ENCODE measurements at regions of chr3 and their contacts with region 1.

Region 1: GRCh38 chr3:49358217-49358883 is at the start of gene GPX1:
- DNase-seq: peak; percentile 94 to 98 (median 97)
- H3K4me3 ChIP-seq: peak within 1 kb of the TSS; percentile 36 to 80 (median 54)
- H3K27ac ChIP-seq: peak within 1 kb of the TSS; percentile 87 to 95 (median 90)
- H3K4me1 ChIP-seq: peaks cover 16 to 37% of the 10 kb centered on the region in 2 donors
- H3K27me3 ChIP-seq: no peaks in the 10 kb centered on the region
- CTCF ChIP-seq: peak in 2 of 6 experiments; percentile 10 to 15
- POLR2A ChIP-seq: peak; percentile 97
- total RNA-seq, gene GPX1: 339 to 1,200 (median 514) TPM

Region 2: GRCh38 chr3:49406571-49407566 is 48.5 kb after region 1 on chr3:
- intact Hi-C with region 1: loop called (anchors 5 to 10 kb)
- DNase-seq: no peak
- H3K4me3 ChIP-seq: no peak overlapping the region
- H3K27ac ChIP-seq: peak overlapping the region; percentile 21 to 48 (median 28)
- H3K4me1 ChIP-seq: peaks cover 24 to 55% of the 10 kb centered on the region in 2 donors
- H3K27me3 ChIP-seq: no peaks in the 10 kb centered on the region
- CTCF ChIP-seq: no peak
- POLR2A ChIP-seq: no peak